Right ventricle myocardium inferior (tissue), 1 donor: ENCODE measurements at regions of chr14 and their contacts with region 1.

Region 1: GRCh38 chr14:95431199-95432143 is 85.0 kb downstream of the SYNE3 start:
- DNase-seq: no peak
- ATAC-seq: peak; percentile 47

Region 2: DNA sequence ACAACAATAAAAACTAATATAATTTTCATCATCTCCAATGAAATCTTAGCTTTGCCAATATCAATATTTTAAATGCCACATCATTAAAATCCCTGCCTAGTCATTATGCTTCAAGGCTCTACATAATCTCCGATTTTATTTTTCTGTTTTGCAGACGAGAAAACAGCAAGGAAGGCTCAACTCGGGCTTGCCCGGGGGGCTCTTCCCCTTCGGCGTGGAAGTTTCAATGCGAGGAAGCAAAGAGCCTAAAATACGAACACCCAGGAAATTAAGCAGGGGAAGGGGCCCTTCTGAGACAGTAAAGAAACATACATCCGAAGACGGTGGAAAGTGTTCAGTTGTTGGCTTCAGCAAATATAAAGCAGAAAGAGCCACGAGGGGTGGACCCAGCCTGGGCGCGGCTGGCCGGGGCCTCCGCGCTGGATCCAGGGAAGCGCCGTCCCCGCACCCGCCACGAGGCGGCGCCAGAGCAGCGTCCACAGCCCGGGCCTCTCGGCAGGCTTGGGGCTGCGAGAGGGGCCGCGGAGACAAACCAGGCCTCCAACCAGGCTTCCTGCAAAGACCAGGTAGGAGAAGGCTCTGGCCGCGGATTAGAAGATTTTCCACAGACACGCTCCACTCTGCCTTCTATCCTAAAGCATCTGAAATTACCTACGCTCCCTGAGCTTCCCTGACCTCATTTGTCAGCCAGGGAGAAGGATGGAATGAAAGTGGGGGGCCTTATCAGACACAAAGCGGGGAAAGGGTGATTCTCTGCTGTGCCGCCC is 742.1 kb before region 1 on chr14:
- intact Hi-C with region 1: loop called (anchors 5 kb)
- DNase-seq: peak; percentile 82
- ATAC-seq: peak; percentile 93

Region 3: DNA sequence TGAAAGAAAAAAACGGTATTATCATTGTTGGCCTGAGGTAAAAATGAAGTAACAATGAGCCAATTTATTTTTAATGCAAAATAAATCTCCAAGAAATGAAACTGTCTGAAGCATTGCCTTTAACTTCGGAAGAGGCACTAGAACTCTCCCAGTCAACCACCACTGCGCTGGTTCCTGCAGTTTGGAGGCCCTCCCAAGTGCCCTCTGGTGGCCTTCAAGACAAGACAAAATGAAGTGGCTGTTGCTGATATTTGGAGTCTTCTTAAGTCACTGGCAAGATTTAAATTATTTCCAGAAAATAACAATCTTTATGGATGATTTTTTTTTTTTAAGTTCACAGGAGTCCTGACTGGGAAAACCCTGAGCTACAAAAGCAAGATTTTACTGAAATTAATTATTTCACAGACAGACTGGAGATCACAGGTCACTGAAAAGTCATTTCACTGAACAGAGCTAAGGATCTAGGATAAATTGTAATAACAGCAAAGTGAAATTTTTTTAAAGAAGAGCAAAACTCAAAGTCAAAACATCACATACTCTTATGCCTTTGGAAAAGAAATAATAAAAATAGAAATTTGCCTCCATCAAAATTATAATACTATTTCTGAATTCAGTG is 332.4 kb before region 1 on chr14:
- intact Hi-C with region 1: loop called (anchors 5 kb)
- DNase-seq: peak; percentile 86
- ATAC-seq: peak; percentile 63

Region 4: DNA sequence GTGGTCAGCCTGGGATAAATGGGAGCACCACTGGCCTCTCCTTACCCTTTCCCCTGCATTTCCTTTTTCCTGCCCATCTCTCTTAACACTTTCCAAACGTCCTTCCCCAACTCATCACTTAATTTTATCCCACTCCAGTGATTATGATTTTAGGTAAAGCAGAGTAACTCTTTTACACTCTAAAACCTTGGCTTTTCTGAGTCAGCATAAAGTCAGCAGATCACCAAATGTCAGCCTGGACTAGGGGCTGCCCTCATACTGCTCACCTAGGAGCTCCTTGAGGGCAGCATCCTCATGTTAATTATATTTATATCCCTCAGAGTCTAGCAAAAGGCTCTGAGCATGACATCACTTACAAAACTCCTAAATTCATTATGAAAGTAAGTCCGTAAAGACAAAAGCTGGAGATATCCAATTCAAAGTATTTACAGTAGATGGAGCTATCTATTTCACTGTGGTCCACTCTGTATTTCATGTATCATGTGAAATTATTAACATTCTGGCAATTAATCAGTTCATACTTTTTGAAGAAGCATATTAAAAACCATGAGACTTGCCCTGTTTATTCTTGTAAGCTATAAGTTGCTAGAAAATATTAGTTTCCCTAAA is 257.2 kb before region 1 on chr14:
- intact Hi-C with region 1: loop called (anchors 5 kb)
- DNase-seq: no peak
- ATAC-seq: peak; percentile 31

Region 5: DNA sequence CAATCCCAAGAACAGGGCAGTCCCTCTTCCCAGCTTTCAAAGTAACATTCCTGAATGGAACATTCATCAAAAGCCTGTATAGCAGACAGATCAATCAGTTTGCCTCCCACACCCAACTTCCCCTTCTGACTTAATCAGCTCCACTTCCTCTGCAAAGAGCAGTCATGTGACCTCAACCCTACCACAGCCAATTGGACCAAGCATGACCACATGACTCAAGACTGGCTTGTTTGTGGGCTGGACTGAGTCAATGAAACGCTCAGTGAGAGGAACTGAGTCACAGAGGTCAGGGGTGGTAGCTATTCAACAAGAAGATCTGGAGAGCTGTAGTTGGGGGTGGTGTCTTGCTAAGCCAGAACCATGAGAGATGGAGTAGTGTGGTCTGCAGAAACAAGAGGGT is 403.9 kb after region 1 on chr14:
- intact Hi-C with region 1: no loop called
- DNase-seq: no peak
- ATAC-seq: no peak